ENCODE measurements at regions of chr9 and their contacts with region 1.

Region 1: DNA sequence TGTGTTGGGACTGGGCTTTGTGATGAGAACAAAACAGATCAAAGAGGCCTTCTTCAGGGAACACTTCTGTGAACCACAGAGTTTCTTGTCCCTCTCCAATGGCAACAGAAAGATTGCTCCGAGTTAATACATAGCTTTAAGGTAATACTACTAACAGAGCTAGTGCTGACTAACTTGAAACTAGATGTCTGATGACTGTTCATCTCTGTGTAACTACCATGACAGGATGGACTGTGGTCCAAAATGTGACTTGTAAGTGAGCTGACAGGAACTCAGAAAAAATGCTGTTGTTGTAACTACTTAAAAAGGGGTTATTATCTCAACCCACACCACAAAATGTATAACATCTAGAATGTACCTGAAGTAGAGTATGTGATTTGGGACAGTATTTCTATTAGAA is 630.2 kb upstream of the DMAC1 start:
- DNase-seq: no peak
- H3K4me3 Mint-ChIP-seq: no peak overlapping the region
- H3K27ac Mint-ChIP-seq: peak overlapping the region; percentile 80
- H3K4me1 Mint-ChIP-seq: peaks cover 30% of the 10 kb centered on the region
- H3K27me3 Mint-ChIP-seq: no peaks in the 10 kb centered on the region

Region 2: GRCh38 chr9:8115570-8115969 is 314.2 kb before region 1 on chr9:
- CTCF ChIA-PET with region 1: no interaction called
- POLR2A ChIA-PET with region 1: no interaction called
- intact Hi-C with region 1: loop called (anchors 1 kb)
- DNase-seq: peak; percentile 18
- H3K4me3 Mint-ChIP-seq: no peak overlapping the region
- H3K27ac Mint-ChIP-seq: peak overlapping the region; percentile 44
- H3K4me1 Mint-ChIP-seq: peaks cover 17% of the 10 kb centered on the region
- H3K27me3 Mint-ChIP-seq: no peaks in the 10 kb centered on the region

Region 3: DNA sequence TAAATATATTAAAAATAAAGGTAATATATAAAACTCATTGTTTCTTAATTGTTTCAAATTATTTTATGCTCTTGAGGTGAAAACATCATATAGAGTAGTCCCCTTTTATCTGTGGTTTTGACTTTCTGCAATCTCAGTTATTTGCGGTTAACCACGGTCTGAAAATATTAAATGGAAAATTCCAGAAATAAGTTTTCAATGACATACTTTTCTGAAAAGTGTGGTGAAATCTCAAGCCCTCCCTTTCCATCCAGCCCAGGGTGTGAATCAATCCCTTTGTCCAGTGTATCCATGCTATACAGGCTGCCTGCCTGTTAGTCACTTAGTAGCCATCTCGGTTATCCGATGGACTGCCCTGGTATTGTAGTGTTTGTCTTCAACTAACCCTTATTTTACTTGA is 83.5 kb before region 1 on chr9:
- CTCF ChIA-PET with region 1: no interaction called
- POLR2A ChIA-PET with region 1: no interaction called
- intact Hi-C with region 1: no loop called
- DNase-seq: no peak
- H3K4me3 Mint-ChIP-seq: no peak overlapping the region
- H3K27ac Mint-ChIP-seq: no peak overlapping the region
- H3K4me1 Mint-ChIP-seq: no peaks in the 10 kb centered on the region
- H3K27me3 Mint-ChIP-seq: peaks cover 3% of the 10 kb centered on the region

Region 4: DNA sequence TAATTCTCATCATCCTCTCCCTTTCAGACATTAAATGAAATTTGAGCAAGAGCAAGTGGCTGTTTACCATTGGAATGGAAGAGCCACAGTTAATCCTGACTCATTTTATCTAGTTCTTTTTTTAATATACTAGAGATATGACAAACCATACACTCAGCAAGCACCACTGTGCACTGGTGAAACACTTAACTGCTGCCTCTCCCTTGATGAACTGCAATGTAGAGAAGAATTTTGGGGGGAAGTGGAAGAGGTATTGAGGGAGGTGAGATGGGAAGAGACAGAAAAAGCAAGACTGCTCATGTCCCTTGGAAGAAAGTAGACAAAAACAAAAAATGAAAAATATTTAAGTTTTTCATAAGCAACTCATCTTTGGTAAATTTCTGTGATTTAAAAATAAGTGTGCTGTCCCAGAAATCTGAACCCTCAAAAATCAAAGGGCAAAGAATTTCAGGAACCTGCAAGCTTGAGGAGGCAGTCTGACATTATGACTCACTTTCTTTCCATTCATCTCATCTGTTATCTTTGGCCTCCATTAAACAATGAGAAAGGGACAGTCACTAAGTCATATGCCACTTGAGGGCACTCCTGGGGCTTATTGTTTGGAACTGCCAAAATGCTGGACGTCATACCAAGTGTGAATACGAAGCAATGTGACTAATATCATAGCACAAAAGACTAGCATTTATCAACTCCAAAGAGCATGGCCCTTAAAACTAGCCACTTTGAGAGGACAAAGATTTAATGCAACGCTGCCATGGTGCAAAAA is 63.4 kb before region 1 on chr9:
- CTCF ChIA-PET with region 1: no interaction called
- POLR2A ChIA-PET with region 1: no interaction called
- intact Hi-C with region 1: loop called (anchors 2 kb)
- DNase-seq: no peak
- H3K4me3 Mint-ChIP-seq: no peak overlapping the region
- H3K27ac Mint-ChIP-seq: no peak overlapping the region
- H3K4me1 Mint-ChIP-seq: peaks cover 4% of the 10 kb centered on the region
- H3K27me3 Mint-ChIP-seq: no peaks in the 10 kb centered on the region